ENCODE measurements at regions of chr6 and their contacts with region 1.

Region 1: GRCh38 chr6:26064619-26065257 is 22.5 kb upstream of the HFE start:
- DNase-seq: no peak
- H3K4me3 ChIP-seq: no peak overlapping the region
- H3K27ac ChIP-seq: no peak overlapping the region
- H3K4me1 ChIP-seq: peaks cover 0 to 10% (median 0%) of the 10 kb centered on the region in 3 donors
- H3K27me3 ChIP-seq: no peaks in the 10 kb centered on the region
- CTCF ChIP-seq: peak; percentile 74 to 78 (median 77)
- POLR2A ChIP-seq: no peak

Region 2: GRCh38 chr6:26097268-26097875 is 32.6 kb after region 1 on chr6:
- intact Hi-C with region 1: loop called (anchors 5 kb)
- DNase-seq: no peak
- H3K4me3 ChIP-seq: no peak overlapping the region
- H3K27ac ChIP-seq: no peak overlapping the region
- H3K4me1 ChIP-seq: no peaks in the 10 kb centered on the region
- H3K27me3 ChIP-seq: no peaks in the 10 kb centered on the region
- CTCF ChIP-seq: peak; percentile 65 to 87 (median 83)
- POLR2A ChIP-seq: no peak

Region 3: DNA sequence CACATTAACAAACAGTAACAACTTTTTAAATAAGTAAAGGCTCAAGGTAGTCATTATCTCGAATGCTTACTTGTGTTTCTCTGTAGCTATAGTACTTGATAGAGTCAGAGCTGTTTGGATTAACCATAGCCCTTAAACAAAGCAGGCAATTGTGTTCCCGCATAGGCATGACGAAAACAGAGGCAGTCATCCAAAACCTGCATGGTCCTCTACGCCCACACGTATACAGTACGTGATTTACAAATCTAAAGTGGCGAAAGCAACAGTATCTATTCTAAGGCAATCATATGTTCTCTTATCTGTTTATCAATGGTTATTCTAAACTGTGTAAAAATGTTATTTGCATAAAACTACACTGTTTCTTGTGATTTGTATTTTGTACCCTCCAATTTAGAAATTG is 54.3 kb after region 1 on chr6:
- intact Hi-C with region 1: no loop called
- DNase-seq: no peak
- H3K4me3 ChIP-seq: no peak overlapping the region
- H3K27ac ChIP-seq: no peak overlapping the region
- H3K4me1 ChIP-seq: peaks cover 4 to 19% (median 6%) of the 10 kb centered on the region in 3 donors
- H3K27me3 ChIP-seq: no peaks in the 10 kb centered on the region
- CTCF ChIP-seq: no peak
- POLR2A ChIP-seq: no peak